Panc1 (cell line): ENCODE measurements at regions of chr16 and their contacts with region 1.

Region 1: DNA sequence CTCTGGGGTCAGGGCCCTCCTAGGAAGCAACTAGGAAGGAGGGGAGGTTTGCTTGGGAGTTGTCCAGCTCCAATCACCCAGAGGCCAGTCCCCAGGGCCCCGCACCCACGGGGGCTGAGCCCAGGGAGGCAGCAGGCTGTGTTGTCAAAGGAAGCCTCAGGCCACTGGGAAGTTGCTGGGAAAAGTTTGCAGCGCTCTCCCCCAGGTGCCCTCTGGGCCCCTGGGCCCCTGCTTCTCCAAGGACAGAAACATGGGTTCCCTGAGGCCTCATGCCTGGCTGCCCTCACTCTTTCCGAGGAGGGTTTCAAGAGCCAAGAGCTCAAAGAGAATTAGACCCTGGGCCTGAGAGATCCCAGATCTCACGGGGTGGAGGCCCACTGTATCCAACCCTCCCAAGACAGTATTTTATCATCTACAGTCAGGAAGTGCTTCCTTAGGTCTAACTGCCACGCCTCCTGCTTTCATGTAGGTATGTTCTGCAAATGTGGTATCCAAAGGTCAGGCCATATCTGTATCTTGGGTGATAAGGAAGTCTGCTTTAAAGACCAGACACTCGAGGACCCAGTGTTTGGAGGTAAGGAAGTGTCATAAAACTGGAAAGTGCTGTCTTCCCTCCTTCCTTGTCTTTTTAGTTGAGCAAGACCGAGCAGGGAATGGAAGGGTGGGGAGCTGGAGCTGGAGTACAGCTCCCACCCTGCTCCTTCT is 44.2 kb upstream of the ZNF423 start:
- DNase-seq: no peak
- ATAC-seq: no peak
- H3K4me3 ChIP-seq: no peak overlapping the region
- H3K27ac ChIP-seq: no peak overlapping the region
- H3K4me1 ChIP-seq: no peaks in the 10 kb centered on the region
- H3K27me3 ChIP-seq: no peaks in the 10 kb centered on the region
- CTCF ChIP-seq: no peak

Region 2: DNA sequence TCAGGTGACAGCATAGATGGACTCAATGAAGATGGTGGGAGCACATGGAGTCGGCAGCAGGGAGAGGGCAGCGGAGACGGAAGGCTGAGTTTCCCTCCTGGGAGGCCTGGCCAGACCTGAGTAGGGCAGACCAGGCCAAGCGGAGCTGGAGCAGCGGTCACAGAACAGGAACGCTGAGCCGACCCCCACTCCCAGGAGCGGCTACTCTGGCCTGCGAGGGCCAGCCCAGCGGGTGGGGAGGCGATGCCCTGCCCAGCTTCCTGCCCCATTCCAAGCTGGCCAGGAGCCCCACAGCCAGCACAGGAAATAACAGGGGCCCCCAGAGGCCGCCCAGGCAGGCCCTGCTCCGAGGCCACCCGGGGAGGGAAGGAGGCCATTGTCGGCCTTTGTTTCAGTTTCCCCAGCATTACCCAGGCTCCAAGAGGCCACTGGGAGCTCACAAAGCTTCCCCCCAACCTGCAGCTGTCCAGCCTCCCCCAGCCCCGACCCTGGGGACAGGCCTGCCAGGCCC is 124.0 kb before region 1 on chr16:
- CTCF ChIA-PET with region 1: no interaction called
- POLR2A ChIA-PET with region 1: no interaction called
- in situ Hi-C with region 1: no loop called
- intact Hi-C with region 1: no loop called
- DNase-seq: no peak
- ATAC-seq: no peak
- H3K4me3 ChIP-seq: no peak overlapping the region
- H3K27ac ChIP-seq: no peak overlapping the region
- H3K4me1 ChIP-seq: no peaks in the 10 kb centered on the region
- H3K27me3 ChIP-seq: no peaks in the 10 kb centered on the region
- CTCF ChIP-seq: no peak

Region 3: DNA sequence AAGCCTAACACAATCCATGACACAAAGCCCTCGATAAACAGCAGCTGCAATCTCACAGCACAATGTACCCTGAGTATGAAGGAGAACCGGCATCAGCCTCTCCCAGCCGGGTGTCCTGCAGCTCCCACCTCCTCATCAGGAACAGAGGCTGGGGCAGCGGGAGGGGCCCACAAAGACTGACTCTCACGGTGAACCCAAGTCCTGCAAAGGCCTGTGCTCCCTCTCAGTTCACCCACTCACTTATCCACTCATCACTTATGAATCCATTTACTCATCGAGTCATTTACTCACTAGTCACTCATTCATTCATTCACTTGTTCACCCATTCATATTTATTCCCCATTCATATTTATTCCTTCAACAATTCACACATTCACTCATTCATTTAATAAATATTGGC is 55.8 kb before region 1 on chr16:
- CTCF ChIA-PET with region 1: no interaction called
- POLR2A ChIA-PET with region 1: no interaction called
- in situ Hi-C with region 1: no loop called
- intact Hi-C with region 1: loop called (anchors 10 kb)
- DNase-seq: no peak
- ATAC-seq: no peak
- H3K4me3 ChIP-seq: no peak overlapping the region
- H3K27ac ChIP-seq: no peak overlapping the region
- H3K4me1 ChIP-seq: no peaks in the 10 kb centered on the region
- H3K27me3 ChIP-seq: no peaks in the 10 kb centered on the region
- CTCF ChIP-seq: no peak